OCI-LY7 (cell line): ENCODE measurements at regions of chr18 and their contacts with region 1.

Region 1: GRCh38 chr18:2917259-2918047 is 70.6 kb downstream of the EMILIN2 start:
- DNase-seq: peak; percentile 90
- H3K4me3 ChIP-seq: peak overlapping the region; percentile 51
- H3K27ac ChIP-seq: peak overlapping the region; percentile 92
- H3K4me1 ChIP-seq: peaks cover 31% of the 10 kb centered on the region
- CTCF ChIP-seq: no peak

Region 2: GRCh38 chr18:2883076-2883735 is 34.2 kb before region 1 on chr18:
- CTCF ChIA-PET with region 1: no interaction called
- POLR2A ChIA-PET with region 1: interaction called, 6 read pairs
- intact Hi-C with region 1: loop called (anchors 1 kb)
- DNase-seq: peak; percentile 84
- H3K4me3 ChIP-seq: peak overlapping the region; percentile 30
- H3K27ac ChIP-seq: peak overlapping the region; percentile 62
- H3K4me1 ChIP-seq: peaks cover 27% of the 10 kb centered on the region
- CTCF ChIP-seq: no peak